ENCODE measurements at regions of chr9 and their contacts with region 1.

Region 1: GRCh38 chr9:128552153-128552743 is at the start of gene SPTAN1:
- DNase-seq: peak; percentile 95 to 98 (median 96)
- H3K4me3 ChIP-seq: peak within 1 kb of the TSS; percentile 61 to 82
- H3K4me3 Mint-ChIP-seq: peak within 1 kb of the TSS in 7 of 8 donors; percentile 92 to 95 (median 93)
- H3K27ac ChIP-seq: peak within 1 kb of the TSS; percentile 91
- H3K27ac Mint-ChIP-seq: peak within 1 kb of the TSS; percentile 96 to 100 (median 99)
- H3K4me1 ChIP-seq: peaks cover 66% of the 10 kb centered on the region
- H3K4me1 Mint-ChIP-seq: peaks cover 22 to 31% (median 27%) of the 10 kb centered on the region in 4 donors
- H3K27me3 ChIP-seq: no peaks in the 10 kb centered on the region
- H3K27me3 Mint-ChIP-seq: no peaks in the 10 kb centered on the region
- total RNA-seq, gene SPTAN1: 593 to 595 TPM

Region 2: GRCh38 chr9:128370826-128371621 is 181.2 kb before region 1 on chr9 and contains the start of gene URM1:
- CTCF ChIA-PET with region 1: no interaction called
- POLR2A ChIA-PET with region 1: interaction called, 10 read pairs
- intact Hi-C with region 1: loop called (anchors 2 kb)
- DNase-seq: peak; percentile 95 to 98 (median 96)
- H3K4me3 ChIP-seq: peak within 1 kb of the TSS; percentile 88 to 95
- H3K4me3 Mint-ChIP-seq: peak within 1 kb of the TSS; percentile 95 to 98 (median 96)
- H3K27ac ChIP-seq: peak within 1 kb of the TSS; percentile 91
- H3K27ac Mint-ChIP-seq: peak within 1 kb of the TSS; percentile 97 to 99 (median 98)
- H3K4me1 ChIP-seq: peaks cover 20% of the 10 kb centered on the region
- H3K4me1 Mint-ChIP-seq: peaks cover 22 to 37% (median 29%) of the 10 kb centered on the region in 4 donors
- H3K27me3 ChIP-seq: no peaks in the 10 kb centered on the region
- H3K27me3 Mint-ChIP-seq: peaks cover 2 to 4% of the 10 kb centered on the region in 2 donors
- total RNA-seq, gene URM1: 44.1 to 45.5 TPM

Region 3: DNA sequence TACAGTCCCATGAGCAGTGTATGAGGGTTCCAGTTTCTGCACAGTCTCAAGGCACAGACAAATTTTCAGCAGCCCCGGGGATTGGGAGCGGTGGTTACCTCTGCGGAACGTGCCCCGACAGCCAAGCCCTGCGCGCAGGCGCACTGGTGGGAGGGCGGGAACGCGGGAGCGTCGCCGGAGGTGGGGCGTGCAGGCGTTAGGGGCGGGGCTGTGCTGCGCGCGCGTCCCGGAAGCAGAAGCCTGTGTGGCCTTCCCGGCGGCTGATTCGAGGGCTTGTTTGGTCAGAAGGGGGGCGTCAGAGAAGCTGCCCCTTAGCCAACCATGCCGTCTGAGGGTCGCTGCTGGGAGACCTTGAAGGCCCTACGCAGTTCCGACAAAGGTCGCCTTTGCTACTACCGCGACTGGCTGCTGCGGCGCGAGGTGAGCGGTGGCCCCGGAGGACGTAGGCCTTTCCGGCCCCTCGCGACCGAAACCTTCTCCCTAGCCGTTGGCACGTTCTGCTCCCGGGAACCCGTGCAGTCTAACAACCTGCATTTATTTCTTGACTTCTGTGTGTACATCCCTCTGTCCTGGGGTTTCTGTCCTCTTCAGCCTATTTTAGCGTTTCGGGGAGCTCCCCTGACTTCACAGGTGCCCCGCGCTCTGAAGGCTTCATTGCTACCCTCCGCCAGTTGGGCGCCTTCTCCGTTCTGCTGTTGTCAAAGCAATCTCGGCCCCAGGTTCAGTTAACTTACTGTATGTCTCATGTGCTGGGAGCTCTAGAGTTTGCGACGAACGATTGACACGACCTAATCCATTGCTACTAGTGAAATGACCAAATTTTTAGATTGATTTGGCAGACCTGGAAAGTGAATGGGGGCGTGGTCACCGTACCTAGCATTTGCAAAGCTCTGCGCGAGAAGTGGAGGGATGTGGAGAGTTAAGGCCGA is 47.5 kb before region 1 on chr9 and contains the start of gene GLE1:
- CTCF ChIA-PET with region 1: no interaction called
- POLR2A ChIA-PET with region 1: interaction called, 59 read pairs
- intact Hi-C with region 1: loop called (anchors 1 kb)
- DNase-seq: peak; percentile 92 to 96 (median 95)
- H3K4me3 ChIP-seq: peak within 1 kb of the TSS; percentile 96 to 100
- H3K4me3 Mint-ChIP-seq: peak within 1 kb of the TSS; percentile 96 to 100 (median 99)
- H3K27ac ChIP-seq: peak within 1 kb of the TSS; percentile 91
- H3K27ac Mint-ChIP-seq: peak within 1 kb of the TSS; percentile 96 to 100 (median 99)
- H3K4me1 ChIP-seq: peaks cover 21% of the 10 kb centered on the region
- H3K4me1 Mint-ChIP-seq: peaks cover 13 to 45% (median 25%) of the 10 kb centered on the region in 4 donors
- H3K27me3 ChIP-seq: no peaks in the 10 kb centered on the region
- H3K27me3 Mint-ChIP-seq: no peaks in the 10 kb centered on the region
- total RNA-seq, gene GLE1: 31.1 to 32.2 TPM

Region 4: GRCh38 chr9:128568470-128569078 is 16.3 kb after region 1 on chr9:
- CTCF ChIA-PET with region 1: interaction called, 3 read pairs
- POLR2A ChIA-PET with region 1: interaction called, 22 read pairs
- intact Hi-C with region 1: no loop called
- DNase-seq: no peak
- H3K4me3 ChIP-seq: no peak overlapping the region
- H3K4me3 Mint-ChIP-seq: no peak overlapping the region
- H3K27ac ChIP-seq: no peak overlapping the region
- H3K27ac Mint-ChIP-seq: peak overlapping the region in 3 of 7 donors; percentile 14 to 86 (median 53)
- H3K4me1 ChIP-seq: peaks cover 4% of the 10 kb centered on the region
- H3K4me1 Mint-ChIP-seq: peaks cover 23 to 51% (median 28%) of the 10 kb centered on the region in 4 donors
- H3K27me3 ChIP-seq: no peaks in the 10 kb centered on the region
- H3K27me3 Mint-ChIP-seq: no peaks in the 10 kb centered on the region

Region 5: GRCh38 chr9:128587453-128587852 is 35.2 kb after region 1 on chr9:
- CTCF ChIA-PET with region 1: no interaction called
- POLR2A ChIA-PET with region 1: interaction called, 13 read pairs
- intact Hi-C with region 1: no loop called
- DNase-seq: peak; percentile 39 to 54 (median 47)
- H3K4me3 ChIP-seq: no peak overlapping the region
- H3K4me3 Mint-ChIP-seq: no peak overlapping the region
- H3K27ac ChIP-seq: no peak overlapping the region
- H3K27ac Mint-ChIP-seq: peak overlapping the region; percentile 35 to 89 (median 73)
- H3K4me1 ChIP-seq: peaks cover 8% of the 10 kb centered on the region
- H3K4me1 Mint-ChIP-seq: peaks cover 6 to 11% (median 7%) of the 10 kb centered on the region in 4 donors
- H3K27me3 ChIP-seq: no peaks in the 10 kb centered on the region
- H3K27me3 Mint-ChIP-seq: no peaks in the 10 kb centered on the region

Region 6: GRCh38 chr9:128723866-128724743 is 171.9 kb after region 1 on chr9 and contains the start of gene ZDHHC12:
- CTCF ChIA-PET with region 1: no interaction called
- POLR2A ChIA-PET with region 1: interaction called, 16 read pairs
- intact Hi-C with region 1: no loop called
- DNase-seq: peak; percentile 98 to 99 (median 99)
- H3K4me3 ChIP-seq: peak within 1 kb of the TSS; percentile 89 to 95
- H3K4me3 Mint-ChIP-seq: peak within 1 kb of the TSS; percentile 90 to 94 (median 92)
- H3K27ac ChIP-seq: peak within 1 kb of the TSS; percentile 70
- H3K27ac Mint-ChIP-seq: peak within 1 kb of the TSS; percentile 89 to 97 (median 95)
- H3K4me1 ChIP-seq: peaks cover 28% of the 10 kb centered on the region
- H3K4me1 Mint-ChIP-seq: peaks cover 23 to 45% (median 32%) of the 10 kb centered on the region in 4 donors
- H3K27me3 ChIP-seq: no peaks in the 10 kb centered on the region
- H3K27me3 Mint-ChIP-seq: no peaks in the 10 kb centered on the region
- total RNA-seq, gene ZDHHC12: 24.6 to 25.7 TPM

Region 7: DNA sequence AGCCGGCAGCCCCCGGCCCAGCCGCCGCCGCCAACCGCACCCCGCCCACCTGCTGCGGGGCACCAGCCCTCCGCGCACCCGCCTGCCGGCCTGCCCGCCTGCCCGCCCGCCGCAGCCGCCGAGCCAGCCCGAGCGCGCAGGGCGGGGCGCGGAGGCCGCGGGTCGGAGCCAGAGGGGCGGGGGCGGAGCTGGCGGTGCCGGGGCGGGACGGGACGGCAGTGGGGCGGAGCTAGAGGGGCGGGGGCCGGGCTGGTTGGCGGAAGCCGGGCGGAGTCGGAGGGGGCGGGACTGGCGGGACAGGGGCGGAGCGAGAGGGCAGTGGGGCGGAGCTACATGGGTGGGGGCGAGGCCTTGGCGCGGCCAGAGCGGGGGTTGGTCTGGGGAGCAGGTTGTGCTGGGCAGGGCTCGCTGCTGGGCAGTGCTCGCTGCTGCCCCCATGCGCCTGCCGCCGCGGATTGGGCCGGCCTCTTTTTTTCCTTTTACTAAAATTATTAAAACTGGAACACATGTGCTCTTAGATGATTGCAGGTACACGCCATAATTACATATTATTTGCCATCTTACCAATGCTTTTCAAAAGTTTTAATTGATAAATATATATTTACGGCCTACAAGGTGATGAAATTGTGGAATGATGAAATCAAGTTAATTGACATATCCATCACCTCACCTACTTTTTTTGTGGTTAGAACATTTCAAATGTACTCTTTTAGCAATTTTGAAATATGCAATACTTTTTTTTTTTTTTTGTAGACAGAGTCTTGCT is 476.1 kb after region 1 on chr9 and contains the start of gene SH3GLB2:
- CTCF ChIA-PET with region 1: no interaction called
- POLR2A ChIA-PET with region 1: no interaction called
- intact Hi-C with region 1: loop called (anchors 5 kb)
- DNase-seq: peak; percentile 84 to 93 (median 86)
- H3K4me3 ChIP-seq: peak within 1 kb of the TSS; percentile 37 to 52
- H3K4me3 Mint-ChIP-seq: peak within 1 kb of the TSS; percentile 79 to 92 (median 84)
- H3K27ac ChIP-seq: peak within 1 kb of the TSS; percentile 34
- H3K27ac Mint-ChIP-seq: peak within 1 kb of the TSS; percentile 78 to 90 (median 85)
- H3K4me1 ChIP-seq: peaks cover 20% of the 10 kb centered on the region
- H3K4me1 Mint-ChIP-seq: peaks cover 15 to 29% (median 20%) of the 10 kb centered on the region in 4 donors
- H3K27me3 ChIP-seq: no peaks in the 10 kb centered on the region
- H3K27me3 Mint-ChIP-seq: no peaks in the 10 kb centered on the region
- total RNA-seq, gene SH3GLB2: 111 to 113 TPM